ENCODE measurements at regions of chr1 and their contacts with region 1.

Region 1: DNA sequence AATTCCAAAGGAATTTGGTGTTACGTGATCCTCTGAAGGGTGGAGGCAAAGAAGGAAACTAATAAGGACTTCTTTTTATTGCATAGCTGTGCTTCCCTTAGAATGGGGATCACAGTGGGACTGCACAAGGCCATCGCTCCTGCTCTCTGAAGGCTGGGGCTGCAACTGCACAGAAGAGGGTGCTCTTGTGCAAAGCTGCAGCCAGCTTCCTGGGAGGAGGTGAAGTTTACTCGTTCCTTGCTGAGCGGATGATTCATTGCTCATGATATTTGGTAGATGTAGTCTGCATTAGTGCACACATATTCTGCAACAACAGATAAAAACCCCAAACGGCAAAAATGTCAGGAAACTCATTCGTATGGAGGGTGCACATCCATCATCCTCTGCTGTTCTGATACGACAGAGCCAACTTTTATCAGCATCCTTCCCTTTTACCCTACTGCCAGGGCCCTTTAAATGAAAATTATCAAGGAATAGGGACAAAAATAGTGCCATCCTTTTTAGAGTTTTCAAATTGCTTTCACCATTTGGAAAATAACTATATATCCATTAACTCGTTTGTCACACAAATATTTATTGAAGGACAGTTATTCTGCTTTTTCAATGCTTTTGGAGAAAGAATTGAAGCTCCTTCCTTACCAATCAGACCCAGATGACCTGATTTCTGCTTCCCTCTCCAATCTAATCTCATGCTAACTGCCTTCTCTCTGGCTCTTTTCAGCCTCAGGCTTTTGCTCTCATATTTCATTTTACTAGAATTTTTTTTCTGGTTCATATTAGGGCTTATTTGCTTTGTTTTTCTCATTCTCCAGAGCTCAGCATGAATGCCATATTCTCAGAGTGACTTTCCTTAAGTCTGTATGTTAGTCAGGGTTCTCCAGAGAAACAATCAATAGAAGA is 263.6 kb downstream of the DUSP10 start:
- DNase-seq: peak; percentile 11
- H3K4me3 ChIP-seq: no peak overlapping the region
- H3K27ac ChIP-seq: no peak overlapping the region
- H3K4me1 ChIP-seq: no peaks in the 10 kb centered on the region
- H3K27me3 ChIP-seq: no peaks in the 10 kb centered on the region
- CTCF ChIP-seq: peak in 3 of 4 experiments; percentile 28 to 38 (median 38)
- POLR2A ChIP-seq: no peak

Region 2: DNA sequence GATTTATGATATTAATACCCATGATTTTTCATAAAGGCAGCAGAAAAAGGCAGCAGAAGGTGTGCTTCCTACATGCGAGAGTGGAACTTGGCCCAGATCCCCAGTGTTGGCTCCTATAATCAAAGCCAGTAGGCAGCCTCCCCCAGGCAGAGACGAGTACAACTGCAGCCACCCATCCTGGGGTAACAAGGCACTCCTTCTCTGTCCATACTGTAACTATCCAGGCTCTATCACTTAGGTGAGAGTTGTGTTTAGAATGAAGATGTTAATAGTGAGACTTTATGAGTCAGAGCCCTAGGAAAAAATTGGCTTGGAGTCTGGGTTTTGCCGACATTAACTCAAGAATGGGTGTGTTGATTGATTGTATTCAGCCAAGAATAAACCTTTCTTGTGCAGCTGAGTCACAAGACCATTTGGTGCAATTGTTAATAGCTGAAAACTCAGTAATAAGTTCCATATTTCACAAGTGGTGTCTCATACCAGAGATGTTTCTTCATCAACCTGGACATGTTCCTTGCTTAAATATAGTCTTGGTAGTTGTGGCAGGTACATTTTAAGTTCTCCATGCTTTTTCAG is 58.7 kb before region 1 on chr1:
- intact Hi-C with region 1: no loop called
- DNase-seq: no peak
- H3K4me3 ChIP-seq: no peak overlapping the region
- H3K27ac ChIP-seq: no peak overlapping the region
- H3K4me1 ChIP-seq: no peaks in the 10 kb centered on the region
- H3K27me3 ChIP-seq: no peaks in the 10 kb centered on the region
- CTCF ChIP-seq: no peak
- POLR2A ChIP-seq: no peak

Region 3: DNA sequence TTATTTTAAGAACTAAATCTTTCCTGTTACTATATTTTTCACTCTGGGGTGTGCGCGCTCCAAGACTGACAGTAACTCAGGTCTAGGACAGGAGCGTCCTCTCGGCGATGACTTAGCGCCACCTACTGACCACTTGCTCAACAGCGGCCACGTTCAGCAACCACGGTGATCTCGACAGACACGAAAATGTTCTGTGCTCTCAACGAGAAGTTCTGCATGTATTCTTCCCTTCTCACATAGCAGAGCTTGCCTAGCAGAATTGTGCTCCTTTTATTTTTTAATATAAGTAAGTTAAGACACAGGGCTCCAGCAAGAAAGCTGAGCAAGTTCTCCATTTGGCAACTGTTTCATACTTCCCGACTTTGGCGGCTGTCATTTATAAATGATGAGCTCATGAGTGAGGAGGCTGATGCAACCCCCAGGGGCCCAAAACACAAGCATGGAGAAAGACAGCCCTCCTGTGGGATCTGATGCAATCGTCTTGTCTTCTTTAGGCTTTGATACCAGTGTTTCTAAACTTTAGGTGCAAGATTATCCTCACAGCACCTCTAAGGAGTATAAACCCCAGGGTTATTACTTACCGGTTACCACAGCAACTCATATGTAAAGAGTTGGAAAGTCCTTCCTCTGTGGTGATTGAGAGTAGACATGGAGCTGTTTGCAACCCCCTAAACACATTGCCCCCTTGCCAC is 977.0 kb after region 1 on chr1:
- intact Hi-C with region 1: loop called (anchors 5 kb)
- DNase-seq: peak; percentile 79
- H3K4me3 ChIP-seq: no peak overlapping the region
- H3K27ac ChIP-seq: no peak overlapping the region
- H3K4me1 ChIP-seq: no peaks in the 10 kb centered on the region
- H3K27me3 ChIP-seq: no peaks in the 10 kb centered on the region
- CTCF ChIP-seq: peak; percentile 75 to 83 (median 78)
- POLR2A ChIP-seq: no peak